ENCODE measurements at regions of chr20 and their contacts with region 1.

Region 1: DNA sequence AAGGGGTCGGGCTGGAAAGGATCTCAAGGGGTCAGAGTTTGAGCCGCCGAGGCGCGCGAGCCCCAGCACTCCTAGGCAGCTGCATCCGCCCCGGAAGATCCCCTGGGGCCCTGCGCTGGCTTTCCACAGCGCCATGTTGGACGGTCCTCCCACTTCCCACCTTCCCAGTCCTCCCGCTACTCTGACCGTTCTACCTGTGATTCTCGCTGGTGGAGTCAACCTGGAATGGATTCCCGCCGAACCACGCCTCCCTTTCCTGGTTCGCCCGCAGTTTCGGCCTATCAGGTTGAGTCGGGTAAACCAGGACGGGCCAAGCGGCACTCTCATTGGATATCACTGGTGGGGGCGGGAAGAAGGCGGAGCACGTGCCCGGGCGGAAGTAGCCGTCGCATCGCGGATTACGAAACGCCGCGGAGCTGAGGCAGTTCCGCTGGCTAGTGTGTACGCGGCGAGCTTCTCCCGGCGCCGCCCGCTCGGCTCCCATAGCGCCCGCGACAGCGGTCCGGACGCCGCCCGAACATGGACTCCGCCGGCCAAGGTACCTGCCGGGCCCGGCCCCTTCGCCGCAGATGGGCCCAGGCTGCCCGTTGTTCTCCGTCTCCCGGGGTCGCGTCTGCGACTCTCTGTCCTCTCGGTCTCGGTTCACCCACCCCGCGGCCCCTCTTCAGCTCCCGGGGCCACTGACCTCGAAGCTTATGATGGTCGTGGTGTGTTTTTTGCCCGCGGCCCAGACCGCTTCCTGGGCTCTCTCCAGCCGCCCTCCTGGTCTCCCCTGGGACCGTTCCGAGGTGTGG is at the start of gene TPD52L2:
- DNase-seq: peak; percentile 92
- H3K4me3 ChIP-seq: peak within 1 kb of the TSS; percentile 96
- H3K27ac ChIP-seq: peak within 1 kb of the TSS; percentile 97
- H3K27me3 ChIP-seq: no peaks in the 10 kb centered on the region
- CTCF ChIP-seq: no peak
- polyA plus RNA-seq, gene TPD52L2: 202 and 219 TPM in 2 replicates

Region 2: DNA sequence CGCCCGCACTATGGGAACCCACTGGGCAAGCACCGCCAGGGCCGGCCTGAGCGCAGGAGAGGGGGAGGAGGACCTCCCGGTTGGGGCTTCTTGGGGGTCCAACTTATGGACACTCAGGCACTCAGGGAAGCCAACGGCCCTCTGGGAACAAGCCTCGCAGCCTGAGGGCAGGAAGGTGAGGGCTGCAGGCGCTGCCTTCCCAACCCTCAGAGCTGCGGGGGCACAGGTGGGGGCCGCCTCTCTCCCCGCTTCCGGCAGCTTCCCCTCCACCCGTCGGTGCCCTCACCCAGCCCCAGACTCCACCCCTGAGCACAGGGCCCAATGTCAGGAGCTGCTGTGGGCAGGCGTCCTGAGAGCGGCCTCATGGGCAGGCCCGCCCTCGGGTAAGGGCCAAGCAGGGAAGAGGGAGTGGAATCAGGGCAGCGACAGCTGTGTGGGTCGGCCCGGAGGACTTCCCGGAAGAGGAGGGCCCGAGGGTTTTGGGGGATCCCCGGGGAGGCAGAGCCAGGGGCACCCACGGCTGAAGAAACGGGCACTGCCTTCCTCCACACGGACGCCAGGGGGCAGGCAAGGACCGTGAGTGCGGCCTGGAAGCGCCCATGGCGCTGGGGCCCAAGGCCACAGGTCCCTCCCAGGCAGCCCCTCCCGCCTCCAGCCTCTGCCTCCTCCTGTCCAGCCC is 327.4 kb before region 1 on chr20:
- CTCF ChIA-PET with region 1: interaction called, 11 read pairs
- POLR2A ChIA-PET with region 1: interaction called, 8 read pairs
- DNase-seq: peak; percentile 81
- H3K4me3 ChIP-seq: peak overlapping the region; percentile 46
- H3K27ac ChIP-seq: no peak overlapping the region
- H3K27me3 ChIP-seq: peaks cover 6% of the 10 kb centered on the region
- CTCF ChIP-seq: peak; percentile 92

Region 3: GRCh38 chr20:63740627-63741354 is 124.3 kb before region 1 on chr20:
- CTCF ChIA-PET with region 1: no interaction called
- POLR2A ChIA-PET with region 1: interaction called, 16 read pairs
- DNase-seq: peak; percentile 63
- H3K4me3 ChIP-seq: peak overlapping the region; percentile 74
- H3K27ac ChIP-seq: peak overlapping the region; percentile 61
- H3K27me3 ChIP-seq: no peaks in the 10 kb centered on the region
- CTCF ChIP-seq: peak; percentile 33; the same call in 1 of the 2 replicates

Region 4: DNA sequence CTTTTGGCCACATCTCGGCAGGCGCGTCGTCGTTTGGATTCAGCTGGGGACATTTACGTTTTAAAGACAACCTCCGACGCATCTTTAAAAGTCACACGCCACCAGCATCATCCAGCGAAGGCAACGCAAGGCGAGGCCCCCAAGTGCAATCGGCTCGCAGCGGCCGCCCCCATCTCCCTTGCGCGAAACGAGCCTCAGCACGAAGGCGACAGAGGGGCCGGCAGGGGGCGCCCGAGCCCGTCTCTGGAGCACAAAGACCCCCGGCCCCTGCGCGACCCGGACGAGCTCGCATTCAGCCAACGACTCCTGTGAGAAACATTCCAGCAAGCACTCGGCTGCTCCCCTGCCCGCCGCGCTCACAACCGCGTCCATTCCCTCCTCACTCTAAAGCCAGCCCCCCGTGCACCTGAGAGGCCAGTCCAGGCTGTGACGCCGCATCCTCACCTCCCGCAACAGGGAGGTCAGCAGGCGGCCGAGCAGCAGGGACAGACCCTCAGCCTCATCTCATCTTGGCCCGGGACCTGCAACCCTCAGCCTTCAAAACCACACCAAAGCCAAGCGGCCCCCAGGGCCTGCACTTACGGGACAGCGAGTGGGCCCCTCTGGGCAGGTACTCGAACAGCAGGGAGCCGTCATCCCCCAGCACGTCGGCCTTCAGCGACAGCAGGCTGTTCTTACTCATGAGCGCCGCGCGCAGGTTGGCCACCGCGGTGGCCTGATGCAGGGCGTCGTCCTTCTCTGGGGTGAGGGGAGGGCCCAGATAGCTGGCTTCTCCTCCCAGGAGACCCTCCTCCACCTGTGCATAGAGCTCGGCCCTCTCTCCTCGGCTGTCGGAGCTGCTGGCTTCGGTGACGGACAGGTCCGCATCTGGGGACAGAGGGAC is 89.7 kb before region 1 on chr20:
- CTCF ChIA-PET with region 1: interaction called, 11 read pairs
- POLR2A ChIA-PET with region 1: interaction called, 3 read pairs
- DNase-seq: no peak
- H3K4me3 ChIP-seq: peak overlapping the region; percentile 27; the same call in 1 of the 2 replicates
- H3K27ac ChIP-seq: no peak overlapping the region
- H3K27me3 ChIP-seq: no peaks in the 10 kb centered on the region
- CTCF ChIP-seq: peak; percentile 82

Region 5: GRCh38 chr20:63835021-63835858 is 29.8 kb before region 1 on chr20:
- CTCF ChIA-PET with region 1: no interaction called
- POLR2A ChIA-PET with region 1: interaction called, 17 read pairs
- DNase-seq: peak; percentile 96
- H3K4me3 ChIP-seq: no peak overlapping the region
- H3K27ac ChIP-seq: peak overlapping the region; percentile 92
- H3K27me3 ChIP-seq: no peaks in the 10 kb centered on the region
- CTCF ChIP-seq: no peak

Region 6: DNA sequence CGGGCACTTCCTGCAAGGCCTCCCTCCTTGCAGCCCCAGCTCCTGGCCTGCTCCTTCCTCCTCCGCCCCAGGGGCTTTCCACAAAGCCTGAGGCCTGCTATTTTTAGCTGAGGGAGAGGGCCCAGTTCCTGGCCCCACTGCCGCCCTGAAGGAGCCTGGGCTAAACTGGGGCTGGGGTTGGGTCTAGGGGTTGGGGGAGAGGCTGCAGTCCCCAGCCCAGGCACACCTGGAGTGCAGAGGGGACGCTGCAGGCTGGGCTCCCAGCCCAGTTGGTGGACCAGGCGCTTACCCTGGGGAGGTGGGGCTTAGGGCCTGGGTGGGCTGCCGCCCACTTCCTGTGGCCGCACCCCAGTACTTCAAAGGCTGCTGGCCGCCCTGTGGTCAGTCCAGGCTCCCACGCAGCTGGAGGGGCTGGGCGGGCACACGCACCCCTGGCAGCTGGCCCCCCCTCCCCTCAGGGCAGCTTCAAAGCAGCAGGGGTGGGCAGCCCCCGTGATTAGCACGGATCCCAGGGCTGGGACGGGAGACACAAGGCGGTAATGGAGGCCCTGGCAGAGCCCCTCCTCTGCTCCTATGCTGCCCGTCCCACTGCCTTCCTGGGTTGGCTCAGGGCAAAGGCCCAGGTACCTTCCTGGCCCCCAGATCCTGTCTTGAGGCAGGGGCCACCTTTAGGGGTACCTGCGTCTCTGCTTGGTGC is 10.8 kb before region 1 on chr20:
- CTCF ChIA-PET with region 1: interaction called, 4 read pairs
- POLR2A ChIA-PET with region 1: interaction called, 15 read pairs
- DNase-seq: no peak
- H3K4me3 ChIP-seq: no peak overlapping the region
- H3K27ac ChIP-seq: no peak overlapping the region
- H3K27me3 ChIP-seq: no peaks in the 10 kb centered on the region
- CTCF ChIP-seq: no peak

Region 7: DNA sequence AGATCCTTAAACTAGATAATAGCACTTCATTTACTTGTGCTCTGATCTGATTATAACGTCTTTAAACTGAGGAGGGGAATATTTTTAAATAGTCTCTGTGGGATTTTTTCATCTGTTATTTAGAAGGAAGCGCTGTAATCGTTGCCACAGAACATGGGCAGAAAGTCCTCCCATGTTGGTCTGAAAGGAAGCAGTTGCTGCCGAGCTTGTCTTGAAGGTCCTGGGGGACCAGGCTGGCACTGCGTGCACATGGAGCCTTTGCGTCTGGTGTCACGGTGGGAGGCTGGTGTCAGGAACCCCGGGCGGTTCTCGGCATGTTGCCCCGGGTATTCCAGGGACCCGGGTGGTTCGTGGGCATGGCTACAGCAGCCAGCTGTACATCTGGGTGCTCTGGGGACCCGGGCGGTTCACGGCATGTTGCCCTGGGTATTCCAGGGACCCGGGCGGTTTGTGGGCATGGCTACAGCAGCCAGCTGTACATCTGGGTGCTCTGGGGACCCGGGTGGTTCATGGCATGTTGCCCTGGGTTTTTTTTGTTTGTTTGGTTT is 11.5 kb after region 1 on chr20:
- CTCF ChIA-PET with region 1: no interaction called
- POLR2A ChIA-PET with region 1: interaction called, 14 read pairs
- DNase-seq: no peak
- H3K4me3 ChIP-seq: no peak overlapping the region
- H3K27ac ChIP-seq: no peak overlapping the region
- H3K27me3 ChIP-seq: no peaks in the 10 kb centered on the region
- CTCF ChIP-seq: no peak

Measured in AG04450 (cell line).